ENCODE measurements at regions of chr21 and their contacts with region 1.

Region 1: DNA sequence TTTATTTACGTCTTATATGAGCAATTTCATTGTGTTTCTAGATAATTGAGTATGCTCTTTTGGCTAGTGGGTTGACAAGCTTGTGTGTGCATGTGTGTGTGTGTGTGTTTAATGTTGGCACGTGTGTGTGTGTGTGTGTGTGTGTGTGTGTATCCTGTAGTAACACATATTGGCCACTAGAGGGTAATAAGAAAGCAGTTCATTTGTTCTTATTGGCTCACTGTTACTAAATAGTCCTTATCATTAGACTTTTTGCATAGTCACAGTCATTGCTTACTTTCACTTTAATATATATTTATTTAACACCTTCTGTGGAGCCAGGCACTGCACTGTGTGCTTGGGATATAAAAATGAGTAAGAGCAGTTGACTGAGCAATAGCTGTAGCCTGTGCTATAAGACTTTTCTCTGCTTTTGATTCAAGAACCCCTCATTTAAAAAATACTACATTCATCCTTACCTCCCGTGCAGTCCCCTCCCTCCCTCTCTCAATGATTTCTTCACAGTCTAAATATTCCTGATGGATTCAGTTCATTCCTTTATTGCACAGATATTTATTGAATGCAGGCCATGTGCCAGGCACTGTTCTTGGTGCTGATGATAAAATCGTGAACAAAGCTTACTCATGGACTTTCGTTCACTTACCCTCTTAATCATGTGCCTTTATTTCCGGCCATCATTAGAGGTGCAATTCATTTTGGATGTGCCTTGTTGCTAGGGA is 96.7 kb downstream of the DYRK1A start:
- DNase-seq: no peak

Region 2: GRCh38 chr21:37358397-37358796 is 104.8 kb before region 1 on chr21:
- CTCF ChIA-PET with region 1: no interaction called
- POLR2A ChIA-PET with region 1: no interaction called
- DNase-seq: no peak

Region 3: GRCh38 chr21:37475186-37475868 is 12.1 kb after region 1 on chr21:
- CTCF ChIA-PET with region 1: interaction called, 10 read pairs
- POLR2A ChIA-PET with region 1: no interaction called
- DNase-seq: no peak

Measured in HEK293T (cell line).